Activated T-helper 2 cell treated with anti-CD3 and anti-CD28 coated beads, Interferon-gamma antibody, Interleukin-2, Interleukin-4, amounts not matched to agents 10 μg/mL and 5 μg/mL and 100 μg/mL, durations not matched to agents 14 hours and 24 hours and 36 hours (primary cell): ENCODE measurements at regions of chr3 and their contacts with region 1.

Region 1: DNA sequence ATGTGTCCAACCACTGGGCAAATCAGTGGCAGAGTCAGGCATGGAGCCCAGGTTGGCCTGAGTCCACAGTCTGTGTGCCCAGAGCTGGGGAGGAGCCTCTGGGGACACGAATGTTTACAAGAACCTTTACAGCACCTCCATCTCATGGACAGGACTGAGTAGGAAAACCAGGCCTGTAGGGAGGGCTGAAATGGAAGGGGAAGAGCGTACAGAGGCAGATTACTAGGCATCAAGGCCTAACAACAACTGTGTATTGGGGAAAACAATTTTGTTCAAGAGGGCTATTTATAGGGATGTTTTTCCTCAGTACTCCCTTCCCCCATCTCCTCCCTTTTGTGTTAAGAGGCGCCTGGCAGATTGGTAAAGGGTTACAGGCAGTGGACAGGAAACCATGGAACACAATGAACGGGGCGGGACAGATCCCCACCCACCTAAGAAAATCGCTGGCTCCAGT is 15.1 kb upstream of the ARHGAP31 start:
- DNase-seq: no peak
- H3K4me3 Mint-ChIP-seq: no peak overlapping the region
- H3K27ac Mint-ChIP-seq: no peak overlapping the region
- H3K4me1 Mint-ChIP-seq: peaks cover 7% of the 10 kb centered on the region
- H3K27me3 Mint-ChIP-seq: peaks cover 1% of the 10 kb centered on the region

Region 2: GRCh38 chr3:119322835-119323722 is 44.0 kb after region 1 on chr3:
- intact Hi-C with region 1: loop called (anchors 10 kb)
- DNase-seq: peak; percentile 87
- H3K4me3 Mint-ChIP-seq: peak overlapping the region; percentile 77
- H3K27ac Mint-ChIP-seq: peak overlapping the region; percentile 83
- H3K4me1 Mint-ChIP-seq: peaks cover 47% of the 10 kb centered on the region
- H3K27me3 Mint-ChIP-seq: peaks cover 2% of the 10 kb centered on the region

Region 3: DNA sequence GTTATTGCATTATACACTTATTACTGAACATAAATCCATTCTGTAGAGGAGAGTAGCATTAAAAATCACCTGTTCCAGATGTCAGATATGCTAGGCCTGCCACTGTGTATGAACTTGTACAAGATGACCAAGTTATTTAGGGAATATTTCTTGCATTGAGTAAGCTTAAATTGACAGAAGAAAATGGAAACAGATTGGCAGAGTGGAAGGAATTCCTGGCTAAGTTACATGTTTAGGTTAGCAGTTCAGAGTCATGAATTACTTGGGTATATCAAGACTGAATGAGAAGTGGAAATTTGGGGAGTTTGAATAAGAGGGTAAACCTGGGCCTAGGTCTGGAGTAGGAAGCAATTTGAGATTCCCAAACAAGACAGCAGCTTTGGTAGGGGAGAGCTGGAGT is 59.6 kb after region 1 on chr3:
- intact Hi-C with region 1: no loop called
- DNase-seq: no peak
- H3K4me3 Mint-ChIP-seq: no peak overlapping the region
- H3K27ac Mint-ChIP-seq: no peak overlapping the region
- H3K4me1 Mint-ChIP-seq: no peaks in the 10 kb centered on the region
- H3K27me3 Mint-ChIP-seq: peaks cover 2% of the 10 kb centered on the region

Region 4: GRCh38 chr3:119453818-119454217 is 174.7 kb after region 1 on chr3:
- intact Hi-C with region 1: no loop called
- DNase-seq: no peak
- H3K4me3 Mint-ChIP-seq: no peak overlapping the region
- H3K27ac Mint-ChIP-seq: no peak overlapping the region
- H3K4me1 Mint-ChIP-seq: peaks cover 10% of the 10 kb centered on the region
- H3K27me3 Mint-ChIP-seq: no peaks in the 10 kb centered on the region